ENCODE measurements at regions of chr6 and their contacts with region 1.

Region 1: GRCh38 chr6:10210052-10210451 is 204.8 kb downstream of the TFAP2A start:
- DNase-seq: no peak
- H3K4me3 ChIP-seq: no peak overlapping the region
- H3K27ac ChIP-seq: no peak overlapping the region
- H3K4me1 ChIP-seq: no peaks in the 10 kb centered on the region
- H3K27me3 ChIP-seq: no peaks in the 10 kb centered on the region
- CTCF ChIP-seq: no peak
- POLR2A ChIP-seq: no peak

Region 2: DNA sequence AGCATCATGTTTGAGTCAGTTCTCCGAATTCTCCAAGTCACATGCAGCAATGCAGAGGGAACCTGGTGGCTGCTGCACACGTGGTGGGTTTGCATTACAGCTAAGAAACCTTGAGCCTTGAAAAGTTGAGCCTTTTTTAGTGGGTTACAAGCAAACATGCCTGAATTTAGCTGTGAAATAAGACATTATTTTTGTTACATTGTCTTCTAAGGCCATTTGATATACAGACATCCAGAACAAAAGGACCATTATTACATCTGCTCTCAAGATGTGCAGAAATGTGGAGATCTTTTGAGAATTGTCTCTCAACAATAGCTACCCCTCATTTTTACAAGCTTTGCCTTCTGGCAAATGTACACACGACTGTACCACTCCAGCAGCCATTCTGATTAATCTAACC is 1054.2 kb before region 1 on chr6:
- intact Hi-C with region 1: loop called (anchors 10 kb)
- DNase-seq: no peak
- H3K4me3 ChIP-seq: no peak overlapping the region
- H3K27ac ChIP-seq: no peak overlapping the region
- H3K4me1 ChIP-seq: no peaks in the 10 kb centered on the region
- H3K27me3 ChIP-seq: no peaks in the 10 kb centered on the region
- CTCF ChIP-seq: no peak
- POLR2A ChIP-seq: no peak

Region 3: DNA sequence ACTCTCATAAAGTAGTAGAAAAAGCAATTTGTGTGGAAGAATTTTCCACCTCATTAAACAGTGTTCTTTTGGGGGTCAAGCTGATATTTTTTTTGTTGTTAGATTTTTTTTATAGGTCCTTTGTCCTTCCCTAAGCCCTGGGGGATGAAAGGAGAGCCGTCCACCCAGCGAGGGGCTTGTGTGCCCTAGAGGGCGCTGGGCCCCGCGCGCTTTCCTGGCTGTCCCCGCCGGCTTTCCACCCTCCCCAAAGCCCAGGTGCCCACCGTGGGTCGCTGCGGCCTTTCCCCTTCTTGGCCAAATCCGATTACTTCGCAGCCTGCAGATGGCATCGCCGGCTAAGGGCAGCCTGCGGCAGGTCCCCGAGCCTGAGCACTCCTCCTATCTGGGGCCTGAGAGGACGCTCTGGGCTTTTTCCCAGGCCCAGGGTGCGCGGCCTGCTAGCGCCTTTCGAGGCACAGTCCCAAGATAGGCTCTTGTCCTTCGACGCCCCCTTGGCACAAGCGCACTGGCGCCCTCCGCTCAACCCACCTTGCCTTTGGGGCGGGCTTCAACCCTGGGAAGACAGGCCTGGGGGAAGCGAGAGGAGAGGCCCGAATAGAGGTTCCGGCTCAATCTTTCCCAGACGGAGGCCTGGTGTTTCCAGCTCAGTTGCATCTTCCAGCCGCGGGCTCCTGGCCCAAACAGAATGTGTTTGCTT is 171.2 kb after region 1 on chr6:
- intact Hi-C with region 1: no loop called
- DNase-seq: no peak
- H3K4me3 ChIP-seq: peak overlapping the region in 1 of 3 donors; percentile 3
- H3K27ac ChIP-seq: no peak overlapping the region
- H3K4me1 ChIP-seq: no peaks in the 10 kb centered on the region
- H3K27me3 ChIP-seq: peaks cover 6 to 23% of the 10 kb centered on the region in 2 donors
- CTCF ChIP-seq: no peak
- POLR2A ChIP-seq: no peak